PC-3 (cell line): ENCODE measurements at regions of chr16 and their contacts with region 1.

Region 1: DNA sequence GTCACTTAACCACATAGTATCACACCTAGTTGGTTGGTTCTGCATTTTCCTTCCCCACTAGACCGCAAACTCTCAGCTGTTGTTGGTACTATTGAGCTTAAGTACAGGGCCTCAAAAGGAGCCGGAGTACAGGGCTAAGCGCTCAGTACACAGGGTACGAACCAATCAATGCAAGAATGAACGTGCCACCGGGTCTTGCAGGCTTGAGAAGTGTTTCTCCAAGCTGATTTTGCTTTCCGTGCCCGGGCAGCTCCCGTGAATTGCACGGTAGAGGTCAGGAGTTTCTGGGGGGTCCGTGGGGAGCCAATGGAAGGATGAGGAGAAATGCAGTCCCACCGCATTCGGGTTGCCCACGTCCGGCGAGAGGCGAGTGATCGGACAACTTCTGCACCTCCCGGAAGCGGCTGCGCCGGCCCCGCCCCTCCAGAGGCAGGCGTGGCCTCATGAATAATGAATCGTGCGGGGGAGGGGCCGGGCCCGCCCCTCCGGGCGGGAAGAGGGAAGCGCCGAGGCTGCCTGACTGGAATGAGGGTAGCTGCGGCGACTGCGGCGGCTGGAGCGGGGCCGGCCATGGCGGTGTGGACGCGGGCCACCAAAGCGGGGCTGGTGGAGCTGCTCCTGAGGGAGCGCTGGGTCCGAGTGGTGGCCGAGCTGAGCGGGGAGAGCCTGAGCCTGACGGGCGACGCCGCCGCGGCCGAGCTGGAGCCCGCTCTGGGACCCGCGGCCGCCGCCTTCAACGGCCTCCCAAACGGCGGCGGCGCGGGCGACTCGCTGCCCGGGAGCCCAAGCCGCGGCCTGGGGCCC is at the start of gene SNTB2:
- DNase-seq: peak; percentile 94
- ATAC-seq: peak; percentile 76
- H3K4me3 ChIP-seq: peak within 1 kb of the TSS; percentile 79
- H3K27ac ChIP-seq: peak within 1 kb of the TSS; percentile 43
- H3K4me1 ChIP-seq: peaks cover 46% of the 10 kb centered on the region
- H3K27me3 ChIP-seq: no peaks in the 10 kb centered on the region
- CTCF ChIP-seq: no peak
- total RNA-seq, gene SNTB2: 40.4 and 62.6 TPM in 2 replicates

Region 2: DNA sequence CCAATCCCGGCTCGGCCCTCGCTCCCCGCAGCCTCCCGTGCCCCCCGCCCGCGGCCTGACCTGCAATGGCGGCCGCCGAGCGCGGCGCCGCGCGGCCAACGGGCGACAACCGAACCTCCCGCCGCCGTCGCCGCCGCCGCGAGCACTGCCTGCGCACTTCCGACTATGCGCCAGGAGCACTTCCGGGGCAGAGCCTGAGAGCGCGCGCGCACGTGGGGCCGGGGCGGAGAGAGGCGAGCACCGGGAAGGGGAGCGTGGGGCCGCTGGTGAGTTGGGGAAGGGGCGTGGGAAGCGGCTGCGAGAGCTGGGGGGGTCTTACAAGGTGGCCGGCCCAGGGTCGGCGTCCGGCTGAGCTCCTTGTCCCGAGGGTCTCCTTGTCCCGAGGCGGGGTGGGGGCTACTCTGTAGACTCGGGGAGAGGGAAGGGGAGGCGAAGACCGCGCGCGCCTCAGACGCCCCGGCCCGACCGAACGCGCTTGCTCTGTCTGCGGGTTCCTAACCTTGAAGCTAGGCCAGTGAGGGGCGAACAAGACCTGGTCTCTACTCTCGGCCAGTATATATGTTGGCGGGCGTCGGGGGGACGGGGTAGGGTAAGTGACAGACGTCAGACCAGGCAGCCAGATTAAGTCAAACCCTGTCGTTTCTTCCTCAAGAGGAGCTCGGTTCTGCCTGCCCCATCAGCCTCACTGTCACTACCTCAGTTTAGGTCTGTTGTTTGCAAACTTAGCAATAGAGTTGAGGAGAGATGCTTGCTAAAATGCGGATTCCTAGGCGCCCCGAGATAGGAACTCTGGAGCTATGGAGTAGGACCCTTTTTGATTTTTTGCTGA is 54.2 kb before region 1 on chr16 and contains the starts of genes CHTF8 and UTP4:
- CTCF ChIA-PET with region 1: no interaction called
- POLR2A ChIA-PET with region 1: no interaction called
- intact Hi-C with region 1: loop called (anchors 2 kb)
- DNase-seq: peak; percentile 71
- ATAC-seq: peak; percentile 93
- H3K4me3 ChIP-seq: peak within 1 kb of the TSS; percentile 97
- H3K27ac ChIP-seq: peak within 1 kb of the TSS; percentile 73
- H3K4me1 ChIP-seq: peaks cover 21% of the 10 kb centered on the region
- H3K27me3 ChIP-seq: no peaks in the 10 kb centered on the region
- CTCF ChIP-seq: no peak
- total RNA-seq, gene CHTF8: 45.9 and 54.7 TPM in 2 replicates
- total RNA-seq, gene UTP4: 26.4 and 26.9 TPM in 2 replicates

Region 3: DNA sequence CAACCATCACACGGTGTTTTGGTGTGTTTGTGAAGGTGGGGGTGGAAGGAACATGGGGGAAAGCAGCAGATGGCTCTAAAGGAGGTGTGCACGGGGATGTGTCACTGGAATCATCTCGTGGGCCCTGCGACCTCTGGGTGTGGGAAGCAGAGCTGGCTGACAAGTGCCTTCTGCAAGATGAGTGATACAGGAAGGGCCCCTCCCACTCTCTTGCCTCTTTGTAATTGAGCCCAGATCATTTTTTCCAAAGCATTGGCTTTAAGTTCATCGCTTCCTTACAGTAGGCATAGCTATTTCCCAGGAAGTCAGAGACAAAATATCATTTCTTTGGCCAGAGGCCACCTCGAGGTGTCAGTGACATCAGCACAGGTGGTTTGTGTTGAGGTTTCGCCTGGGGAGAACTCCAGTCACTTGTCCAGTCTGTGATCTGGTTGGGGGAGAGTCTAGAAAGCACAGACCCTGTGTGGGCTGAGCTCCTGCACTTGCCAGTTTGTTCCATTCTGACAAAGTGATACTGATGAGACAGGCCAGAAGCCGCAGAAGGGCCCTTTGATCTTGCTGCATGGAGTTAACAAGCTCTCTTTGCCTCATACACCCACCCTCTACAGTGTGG is 20.5 kb before region 1 on chr16:
- CTCF ChIA-PET with region 1: interaction called, 3 read pairs
- POLR2A ChIA-PET with region 1: no interaction called
- intact Hi-C with region 1: loop called (anchors 2 kb)
- DNase-seq: peak; percentile 76
- ATAC-seq: peak; percentile 68
- H3K4me3 ChIP-seq: peak overlapping the region; percentile 28; the same call in 1 of the 2 replicates
- H3K27ac ChIP-seq: peak overlapping the region; percentile 99
- H3K4me1 ChIP-seq: peaks cover 29% of the 10 kb centered on the region
- H3K27me3 ChIP-seq: no peaks in the 10 kb centered on the region
- CTCF ChIP-seq: no peak

Region 4: DNA sequence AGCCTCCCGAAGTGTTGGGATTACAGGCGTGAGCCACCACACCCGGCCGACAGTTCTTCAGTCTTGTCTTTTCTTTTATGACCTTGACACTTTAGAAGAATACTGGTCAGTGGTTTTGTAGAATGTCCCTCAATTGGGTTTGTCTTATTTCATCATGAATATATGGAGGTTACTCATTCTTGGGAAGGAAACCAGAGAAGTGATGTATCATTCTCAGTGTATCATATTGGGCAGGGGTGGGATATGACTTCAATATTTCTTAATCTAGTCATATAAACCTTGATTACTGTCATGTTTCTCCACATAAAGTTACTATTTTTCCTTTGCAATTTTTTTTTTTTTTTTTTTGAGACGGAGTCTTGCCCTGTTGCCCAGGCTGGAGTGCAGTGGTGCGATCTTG is 37.0 kb after region 1 on chr16:
- CTCF ChIA-PET with region 1: no interaction called
- POLR2A ChIA-PET with region 1: no interaction called
- intact Hi-C with region 1: loop called (anchors 5 kb)
- DNase-seq: peak; percentile 41
- ATAC-seq: no peak
- H3K4me3 ChIP-seq: no peak overlapping the region
- H3K27ac ChIP-seq: no peak overlapping the region
- H3K4me1 ChIP-seq: peaks cover 24% of the 10 kb centered on the region
- H3K27me3 ChIP-seq: no peaks in the 10 kb centered on the region
- CTCF ChIP-seq: no peak